Activated CD4-positive, alpha-beta memory T cell treated with anti-CD3 and anti-CD28 coated beads for 36 hours (primary cell): ENCODE measurements at regions of chr3 and their contacts with region 1.

Region 1: DNA sequence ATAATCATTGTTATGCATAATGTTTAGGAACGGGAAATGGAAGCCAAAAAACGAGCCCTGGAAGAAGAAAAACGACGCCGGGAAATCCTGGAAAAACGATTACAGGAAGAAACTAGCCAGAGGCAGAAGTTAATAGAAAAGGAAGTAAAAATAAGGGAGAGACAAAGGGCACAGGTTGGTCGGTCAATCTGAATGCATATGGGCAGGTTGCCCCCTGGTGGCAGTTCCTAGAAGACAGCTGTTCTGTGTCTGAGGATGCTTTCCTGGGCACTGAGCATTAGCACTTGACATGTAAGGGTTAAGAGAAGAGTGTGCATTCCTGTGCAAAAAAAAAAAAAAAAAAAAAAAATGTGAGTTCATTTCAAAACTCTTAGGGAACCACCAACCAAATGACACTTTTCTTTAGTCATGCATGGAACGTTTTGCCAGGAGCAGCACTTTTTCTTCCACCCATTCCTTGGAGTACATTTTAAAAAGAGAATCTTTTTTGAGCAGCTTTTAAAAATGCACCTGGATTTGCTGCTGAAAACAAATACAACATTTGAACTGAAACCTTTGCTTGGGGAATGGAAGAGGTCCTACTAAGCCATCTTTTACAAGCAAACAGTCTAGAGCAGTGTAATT is 11.1 kb upstream of the ABHD10 start:
- DNase-seq: peak; percentile 87
- H3K4me3 Mint-ChIP-seq: no peak overlapping the region
- H3K27ac Mint-ChIP-seq: no peak overlapping the region
- H3K4me1 Mint-ChIP-seq: peaks cover 21% of the 10 kb centered on the region
- H3K27me3 Mint-ChIP-seq: no peaks in the 10 kb centered on the region

Region 2: DNA sequence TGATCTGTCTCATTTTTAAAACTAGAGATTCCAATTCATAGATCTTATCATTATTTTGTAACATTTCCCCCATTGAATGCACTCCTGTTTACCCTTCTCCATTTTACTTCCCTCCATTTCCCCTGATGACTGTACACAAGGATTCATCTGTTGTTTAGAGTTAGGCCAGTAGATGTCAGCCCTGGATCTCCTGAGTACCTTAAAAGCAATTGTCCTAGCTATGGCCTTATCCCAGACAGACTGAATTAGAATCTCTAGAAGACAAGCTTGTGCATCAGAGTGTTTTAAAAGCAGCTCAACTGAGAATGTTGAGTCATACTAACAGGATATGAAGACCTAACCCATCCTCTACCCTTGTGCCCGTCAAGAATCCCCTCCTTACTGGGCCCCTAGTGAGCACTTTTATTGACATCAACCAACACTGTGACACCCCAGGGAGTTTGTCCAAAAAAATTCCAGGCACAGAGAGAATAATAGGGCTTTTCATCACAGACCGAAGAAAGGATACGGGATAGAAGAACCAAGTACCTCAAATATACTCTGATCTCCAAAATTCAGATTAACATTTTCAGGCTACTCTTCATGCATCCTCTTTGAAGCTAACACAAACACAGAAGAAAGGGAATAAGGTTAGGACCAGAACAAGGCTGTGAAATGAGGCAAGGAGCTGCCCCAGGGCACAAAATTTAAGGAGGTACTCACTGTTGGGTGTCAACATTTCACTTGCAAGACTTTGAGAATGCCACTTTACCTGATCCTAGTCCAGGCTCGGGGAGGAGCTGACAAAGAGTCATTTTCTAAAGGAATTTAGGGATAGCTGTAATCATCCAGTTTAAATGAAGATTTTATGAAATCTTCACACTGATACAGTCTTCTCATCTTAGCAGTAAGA is 389.7 kb before region 1 on chr3:
- CTCF ChIA-PET with region 1: interaction called, 12 read pairs
- POLR2A ChIA-PET with region 1: no interaction called
- intact Hi-C with region 1: no loop called
- DNase-seq: no peak
- H3K4me3 Mint-ChIP-seq: peak overlapping the region; percentile 35
- H3K27ac Mint-ChIP-seq: peak overlapping the region; percentile 83
- H3K4me1 Mint-ChIP-seq: peaks cover 73% of the 10 kb centered on the region
- H3K27me3 Mint-ChIP-seq: no peaks in the 10 kb centered on the region

Region 3: GRCh38 chr3:111761309-111761831 is 206.4 kb before region 1 on chr3:
- CTCF ChIA-PET with region 1: interaction called, 3 read pairs
- POLR2A ChIA-PET with region 1: no interaction called
- intact Hi-C with region 1: loop called (anchors 1 kb)
- DNase-seq: peak; percentile 29
- H3K4me3 Mint-ChIP-seq: no peak overlapping the region
- H3K27ac Mint-ChIP-seq: peak overlapping the region; percentile 51
- H3K4me1 Mint-ChIP-seq: peaks cover 15% of the 10 kb centered on the region
- H3K27me3 Mint-ChIP-seq: no peaks in the 10 kb centered on the region

Region 4: GRCh38 chr3:111895079-111895478 is 72.7 kb before region 1 on chr3:
- CTCF ChIA-PET with region 1: interaction called, 6 read pairs
- POLR2A ChIA-PET with region 1: no interaction called
- intact Hi-C with region 1: loop called (anchors 5 kb)
- DNase-seq: no peak
- H3K4me3 Mint-ChIP-seq: no peak overlapping the region
- H3K27ac Mint-ChIP-seq: no peak overlapping the region
- H3K4me1 Mint-ChIP-seq: peaks cover 7% of the 10 kb centered on the region
- H3K27me3 Mint-ChIP-seq: no peaks in the 10 kb centered on the region

Region 5: DNA sequence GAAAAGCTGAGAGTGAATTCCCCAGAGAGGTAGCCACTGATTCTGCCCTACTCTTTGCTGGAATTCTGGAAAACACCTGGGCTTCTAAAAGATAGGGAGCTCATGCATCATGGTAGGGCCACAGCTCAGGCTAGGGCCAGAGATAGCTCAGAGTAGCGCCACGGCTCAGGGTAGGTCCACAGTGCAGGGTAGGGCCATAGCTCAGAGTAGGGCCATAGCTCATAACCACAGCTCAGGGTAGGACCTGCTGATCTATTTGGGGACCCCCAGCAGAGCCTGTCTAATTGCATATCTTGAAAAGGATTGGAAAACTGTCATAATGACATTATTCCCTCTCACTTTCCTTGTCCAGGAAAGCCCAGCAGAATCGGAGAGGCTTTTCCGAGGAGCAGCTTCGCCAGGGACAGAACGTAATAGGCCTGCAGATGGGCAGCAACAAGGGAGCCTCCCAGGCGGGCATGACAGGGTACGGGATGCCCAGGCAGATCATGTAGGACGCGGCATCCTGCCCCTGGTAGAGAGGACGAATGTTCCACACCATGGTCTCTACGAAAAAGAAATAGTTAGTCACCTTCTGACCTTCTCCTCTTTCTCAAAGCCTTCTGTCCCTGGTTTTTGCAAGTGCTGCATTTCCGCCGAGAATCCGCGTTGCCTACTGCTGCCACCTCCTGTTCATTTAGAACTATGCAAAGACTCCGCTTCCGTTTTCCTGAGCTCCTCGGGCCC is 45.5 kb after region 1 on chr3:
- CTCF ChIA-PET with region 1: interaction called, 38 read pairs
- POLR2A ChIA-PET with region 1: no interaction called
- intact Hi-C with region 1: loop called (anchors 1 kb)
- DNase-seq: peak; percentile 82
- H3K4me3 Mint-ChIP-seq: no peak overlapping the region
- H3K27ac Mint-ChIP-seq: peak overlapping the region; percentile 40
- H3K4me1 Mint-ChIP-seq: peaks cover 19% of the 10 kb centered on the region
- H3K27me3 Mint-ChIP-seq: no peaks in the 10 kb centered on the region